ENCODE measurements at regions of chr9 and their contacts with region 1.

Region 1: DNA sequence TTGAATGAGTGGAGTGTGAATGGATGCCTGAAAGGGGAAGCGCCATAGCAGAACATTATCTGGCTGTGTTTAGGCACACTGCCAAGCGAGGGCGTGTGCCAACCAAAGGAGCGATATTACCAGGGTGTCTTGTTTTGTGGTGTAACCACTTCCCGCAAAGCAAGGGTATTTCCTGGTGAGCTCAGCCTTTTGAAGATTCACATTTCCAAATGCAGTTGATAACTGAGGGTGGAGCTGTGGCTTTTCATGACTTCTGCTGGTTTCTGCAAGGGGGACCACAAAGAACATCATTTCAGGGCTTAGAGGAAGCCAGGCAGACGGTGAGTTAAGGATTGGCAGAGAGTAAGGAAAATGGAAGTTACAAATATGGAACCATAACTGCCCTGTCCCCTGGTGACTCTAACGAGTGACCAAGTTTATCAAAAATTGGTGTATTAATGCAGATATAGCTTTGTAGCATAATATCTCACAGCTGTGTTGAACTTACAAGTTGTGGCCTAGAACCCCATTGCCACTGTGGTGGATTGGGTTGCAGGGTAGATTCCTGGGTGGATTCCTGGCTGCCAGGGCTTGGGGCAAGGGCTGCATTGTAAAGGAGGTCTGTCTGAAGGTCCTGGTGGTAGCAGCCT is 71.4 kb downstream of the RALGPS1 start:
- DNase-seq: peak; percentile 89
- H3K4me3 Mint-ChIP-seq: peak overlapping the region; percentile 40
- H3K27ac Mint-ChIP-seq: peak overlapping the region; percentile 90
- H3K4me1 Mint-ChIP-seq: peaks cover 50% of the 10 kb centered on the region
- H3K27me3 Mint-ChIP-seq: peaks cover 63% of the 10 kb centered on the region

Region 2: GRCh38 chr9:126523611-126524111 is 462.3 kb before region 1 on chr9:
- CTCF ChIA-PET with region 1: no interaction called
- DNase-seq: peak; percentile 49
- H3K4me3 Mint-ChIP-seq: peak overlapping the region; percentile 1
- H3K27ac Mint-ChIP-seq: no peak overlapping the region
- H3K4me1 Mint-ChIP-seq: peaks cover 12% of the 10 kb centered on the region
- H3K27me3 Mint-ChIP-seq: peaks cover 79% of the 10 kb centered on the region

Region 3: GRCh38 chr9:127004946-127005769 is 19.2 kb after region 1 on chr9:
- CTCF ChIA-PET with region 1: interaction called, 13 read pairs
- DNase-seq: peak; percentile 84
- H3K4me3 Mint-ChIP-seq: no peak overlapping the region
- H3K27ac Mint-ChIP-seq: peak overlapping the region; percentile 74
- H3K4me1 Mint-ChIP-seq: peaks cover 32% of the 10 kb centered on the region
- H3K27me3 Mint-ChIP-seq: peaks cover 16% of the 10 kb centered on the region

Region 4: DNA sequence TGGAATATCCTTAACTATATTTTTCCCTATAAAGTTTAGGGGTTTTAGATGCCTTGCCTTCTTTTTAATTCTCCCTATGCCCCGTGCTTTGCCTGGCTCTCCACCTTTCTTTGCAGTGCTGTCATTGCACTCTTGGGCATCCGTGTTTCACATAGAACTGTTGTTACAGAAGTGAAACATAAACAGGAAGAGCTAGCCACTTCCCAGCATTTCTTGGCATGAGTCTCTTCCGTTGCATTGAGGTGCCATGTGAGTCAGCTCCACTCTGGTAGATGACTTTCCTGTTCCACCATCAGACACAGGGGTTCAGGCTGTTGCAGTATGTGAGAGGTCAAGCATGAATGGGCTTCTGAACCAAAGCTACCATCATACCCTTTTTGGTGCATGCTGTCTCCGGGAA is 63.1 kb after region 1 on chr9:
- CTCF ChIA-PET with region 1: interaction called, 19 read pairs
- DNase-seq: peak; percentile 50
- H3K4me3 Mint-ChIP-seq: peak overlapping the region; percentile 58
- H3K27ac Mint-ChIP-seq: peak overlapping the region; percentile 56
- H3K4me1 Mint-ChIP-seq: peaks cover 41% of the 10 kb centered on the region
- H3K27me3 Mint-ChIP-seq: peaks cover 3% of the 10 kb centered on the region